PC-3 (cell line): ENCODE measurements at regions of chr4 and their contacts with region 1.

Region 1: GRCh38 chr4:174604198-174604597 is 81.9 kb upstream of the HPGD start:
- DNase-seq: peak; percentile 91
- ATAC-seq: peak; percentile 93
- H3K4me3 ChIP-seq: no peak overlapping the region
- H3K27ac ChIP-seq: peak overlapping the region; percentile 95
- H3K4me1 ChIP-seq: peaks cover 29% of the 10 kb centered on the region
- H3K27me3 ChIP-seq: no peaks in the 10 kb centered on the region
- CTCF ChIP-seq: no peak

Region 2: DNA sequence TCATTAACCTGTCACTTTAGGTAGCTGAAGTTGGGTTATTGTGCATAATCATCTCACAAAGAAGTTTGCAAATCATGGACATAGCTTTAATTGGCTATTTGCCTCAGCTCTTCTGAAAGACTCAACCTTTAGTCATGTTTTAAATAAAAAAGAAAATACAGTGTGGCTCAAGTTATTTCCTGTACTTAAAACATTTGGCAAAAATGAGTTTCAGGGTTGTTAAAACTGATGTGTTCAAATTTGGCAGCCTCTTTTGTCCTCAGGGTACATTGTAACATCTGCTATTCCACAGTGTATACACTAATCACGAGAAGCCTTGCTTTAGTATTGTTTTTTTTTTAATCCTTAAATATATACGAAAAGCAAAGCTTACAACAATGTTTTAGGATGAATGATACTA is 50.4 kb before region 1 on chr4:
- CTCF ChIA-PET with region 1: no interaction called
- POLR2A ChIA-PET with region 1: no interaction called
- intact Hi-C with region 1: loop called (anchors 2 kb)
- DNase-seq: peak; percentile 83
- ATAC-seq: peak; percentile 86
- H3K4me3 ChIP-seq: no peak overlapping the region
- H3K27ac ChIP-seq: peak overlapping the region; percentile 86
- H3K4me1 ChIP-seq: peaks cover 24% of the 10 kb centered on the region
- H3K27me3 ChIP-seq: no peaks in the 10 kb centered on the region
- CTCF ChIP-seq: no peak

Region 3: GRCh38 chr4:174739576-174739975 is 135.4 kb after region 1 on chr4:
- CTCF ChIA-PET with region 1: no interaction called
- POLR2A ChIA-PET with region 1: no interaction called
- intact Hi-C with region 1: no loop called
- DNase-seq: no peak
- ATAC-seq: no peak
- H3K4me3 ChIP-seq: no peak overlapping the region
- H3K27ac ChIP-seq: no peak overlapping the region
- H3K4me1 ChIP-seq: no peaks in the 10 kb centered on the region
- H3K27me3 ChIP-seq: no peaks in the 10 kb centered on the region
- CTCF ChIP-seq: no peak

Region 4: GRCh38 chr4:174757736-174758135 is 153.5 kb after region 1 on chr4:
- CTCF ChIA-PET with region 1: no interaction called
- POLR2A ChIA-PET with region 1: no interaction called
- intact Hi-C with region 1: no loop called
- DNase-seq: no peak
- ATAC-seq: no peak
- H3K4me3 ChIP-seq: no peak overlapping the region
- H3K27ac ChIP-seq: no peak overlapping the region
- H3K4me1 ChIP-seq: no peaks in the 10 kb centered on the region
- H3K27me3 ChIP-seq: no peaks in the 10 kb centered on the region
- CTCF ChIP-seq: no peak